Left cardiac atrium (tissue), 4 donors: ENCODE measurements at regions of chr11 and their contacts with region 1.

Region 1: DNA sequence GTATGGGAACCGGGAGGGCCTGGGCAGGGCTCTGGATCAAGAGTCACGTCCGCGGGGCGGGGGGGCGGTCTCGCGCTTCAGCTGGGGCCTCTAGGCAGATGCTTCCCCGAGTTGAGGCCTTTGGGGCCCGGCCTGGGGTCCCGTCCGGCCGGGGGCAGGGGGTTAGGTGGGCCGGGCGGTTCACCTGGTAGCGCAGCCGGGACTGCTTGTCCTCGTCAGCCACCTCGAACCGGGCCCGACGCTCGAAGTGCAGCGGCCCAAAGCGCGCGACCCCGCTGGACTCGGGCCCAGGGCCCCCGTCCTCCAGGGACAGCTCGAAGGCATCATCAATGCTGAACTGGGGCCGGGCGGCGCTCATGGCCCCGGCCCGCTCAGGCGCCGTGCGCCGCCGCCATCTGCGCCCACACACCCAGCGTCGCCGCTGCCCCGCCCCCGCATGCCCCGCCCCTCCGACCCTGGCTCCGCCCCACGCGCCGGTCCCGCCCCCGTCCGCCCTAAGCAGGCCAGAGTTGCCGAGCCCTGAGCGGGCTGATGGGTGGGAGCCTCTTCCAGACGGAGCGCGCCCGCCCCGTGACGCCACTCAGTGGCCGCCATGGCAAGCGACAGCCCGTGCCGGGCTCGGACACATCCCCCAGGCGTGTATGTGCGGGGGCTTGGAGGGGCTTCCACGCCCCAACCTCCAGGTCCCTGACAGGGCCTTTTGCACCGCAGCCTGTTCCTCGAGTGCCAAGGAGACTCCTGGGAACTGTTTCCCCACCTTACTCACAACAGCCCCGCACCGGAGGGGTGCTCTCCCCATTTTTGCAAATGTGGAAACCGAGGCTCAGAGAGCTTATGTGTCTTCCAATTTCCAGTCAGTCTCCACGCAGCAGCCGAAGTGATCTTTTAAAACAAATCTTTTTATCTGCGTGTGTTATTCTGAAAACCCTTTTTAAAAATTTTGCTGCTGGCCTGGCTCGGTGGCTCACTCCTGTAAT is at the start of gene TMEM134:
- DNase-seq: peak; percentile 93
- ATAC-seq: peak; percentile 92 to 95
- total RNA-seq, gene TMEM134: 50.5 to 58.1 TPM

Region 2: DNA sequence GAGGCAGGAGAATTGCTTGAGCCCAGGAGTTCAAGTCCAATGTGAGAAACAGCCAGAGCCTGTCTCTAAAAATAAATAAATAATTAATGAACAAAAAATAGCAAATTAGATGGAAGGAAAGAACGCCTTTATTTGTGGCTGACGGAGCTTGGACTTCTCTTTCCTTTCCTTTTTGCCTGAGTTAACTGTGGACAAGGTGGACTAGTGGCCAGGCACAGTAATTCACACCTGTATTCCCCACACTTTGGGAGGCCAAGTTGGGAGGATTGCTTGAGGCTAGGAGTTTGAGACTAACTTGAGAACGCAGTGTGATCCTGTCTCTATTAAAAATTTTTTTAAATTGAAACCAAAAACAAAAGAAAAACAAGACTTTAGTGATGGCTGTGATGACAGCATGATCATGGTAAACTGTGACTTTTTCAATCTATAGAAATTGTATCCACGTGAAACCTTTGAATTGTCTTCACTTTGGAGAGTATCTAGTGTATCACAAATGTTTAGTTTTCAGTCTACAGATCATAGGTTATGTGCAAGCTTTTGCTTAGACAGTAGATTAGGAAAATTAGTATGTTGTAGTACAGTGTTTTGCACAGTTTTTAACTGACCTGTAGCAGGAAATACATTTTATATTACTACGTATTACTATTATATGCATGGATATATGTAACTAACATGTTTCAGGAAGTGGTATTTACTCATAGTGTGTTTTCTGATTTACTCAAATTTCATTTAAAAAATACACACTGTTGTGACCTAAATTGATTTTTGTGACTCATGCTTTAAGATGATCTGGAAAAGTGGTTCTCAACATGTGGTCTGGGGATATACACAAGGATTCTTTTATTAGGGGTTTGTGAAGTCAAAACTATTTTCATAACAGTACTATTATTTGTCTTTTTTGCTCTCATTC is 308.0 kb before region 1 on chr11:
- intact Hi-C with region 1: no loop called
- DNase-seq: no peak
- ATAC-seq: no peak

Region 3: GRCh38 chr11:67401495-67402191 is 67.5 kb before region 1 on chr11 and contains the start of gene PPP1CA:
- intact Hi-C with region 1: loop called (anchors 5 to 10 kb)
- DNase-seq: peak; percentile 93
- ATAC-seq: peak; percentile 87 to 90
- total RNA-seq, gene PPP1CA: 86.7 to 94.1 TPM

Region 4: DNA sequence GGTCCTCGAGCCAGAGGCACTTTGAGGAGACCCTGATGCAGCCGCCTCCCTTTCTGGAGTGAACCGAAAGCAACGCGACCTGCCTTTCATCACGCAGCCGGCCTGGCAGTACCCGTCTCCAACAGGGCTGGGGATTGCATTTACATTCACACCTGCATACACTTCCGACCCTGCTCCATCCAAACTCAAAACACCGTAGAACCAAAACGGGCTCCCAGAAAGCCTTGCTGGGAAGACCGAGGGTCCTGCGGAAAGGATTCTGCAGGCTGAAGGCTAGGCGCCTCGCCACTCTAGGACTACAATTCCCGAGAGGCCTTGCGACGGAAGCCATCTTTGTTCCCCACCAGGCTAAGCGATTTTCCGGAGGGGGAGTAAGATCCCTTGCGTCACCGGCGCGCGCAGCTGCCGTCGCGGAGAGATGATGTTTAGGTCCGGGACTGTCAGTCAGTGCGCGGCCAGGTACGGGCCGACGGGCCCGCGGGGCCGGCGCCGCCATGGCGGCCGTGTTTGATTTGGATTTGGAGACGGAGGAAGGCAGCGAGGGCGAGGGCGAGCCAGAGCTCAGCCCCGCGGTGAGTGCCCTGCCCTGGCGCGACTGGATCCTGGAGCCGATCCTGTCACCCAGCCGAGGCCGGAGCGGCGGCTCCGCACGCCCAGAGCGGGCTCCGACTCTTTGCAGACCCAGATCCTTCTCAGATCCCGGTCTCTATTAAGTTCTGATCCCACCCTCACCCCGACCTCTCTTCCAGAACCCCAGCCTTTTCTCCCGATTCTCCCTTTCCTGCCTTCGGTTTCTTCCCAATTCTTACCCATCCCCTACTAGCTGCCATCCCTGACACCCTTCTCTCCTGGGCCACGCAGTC is 40.8 kb before region 1 on chr11 and contains the start of gene RPS6KB2:
- intact Hi-C with region 1: loop called in 1 of 2 experiments (anchors 5 kb)
- DNase-seq: peak; percentile 98
- ATAC-seq: peak; percentile 92 to 94
- total RNA-seq, gene RPS6KB2: 25.5 to 31.0 TPM